WTC11 (cell line): ENCODE measurements at regions of chr12 and their contacts with region 1.

Region 1: DNA sequence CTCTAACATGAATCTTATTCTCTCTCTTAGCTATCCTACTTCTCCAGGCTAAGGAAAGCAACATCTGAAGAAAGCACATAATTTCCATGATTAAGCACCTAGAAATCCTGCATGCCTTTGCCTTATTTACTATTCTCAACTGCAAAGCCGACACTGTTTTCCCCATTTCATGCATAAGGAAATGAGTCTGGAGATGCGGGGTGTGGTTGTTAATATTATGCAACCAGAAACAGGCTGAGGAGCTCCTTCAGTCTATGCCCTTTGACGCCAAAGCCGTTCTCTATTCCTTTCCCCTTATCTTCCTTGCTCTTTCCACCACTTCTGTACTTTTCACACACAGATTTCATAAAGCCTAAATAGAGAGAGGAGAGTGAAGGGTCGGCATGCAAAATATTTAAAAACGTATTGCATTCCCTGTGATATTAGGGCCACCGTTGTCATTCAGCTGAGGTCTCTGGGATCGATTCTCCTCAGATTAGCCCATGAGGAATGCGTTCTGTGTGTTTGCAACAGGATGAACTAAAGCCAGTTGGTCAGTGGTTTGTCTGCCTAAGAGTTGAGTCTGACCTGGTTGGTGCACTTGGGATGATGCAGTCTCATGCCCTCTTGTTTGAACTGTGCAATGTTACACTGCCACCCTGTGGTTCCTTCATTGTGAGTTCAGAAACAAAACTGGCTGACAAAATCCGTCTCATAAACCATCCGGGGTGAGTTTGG is 53.1 kb upstream of the PLEKHG7 start:
- DNase-seq: peak; percentile 50
- ATAC-seq: peak; percentile 98
- H3K4me3 Mint-ChIP-seq: no peak overlapping the region
- H3K27ac Mint-ChIP-seq: peak overlapping the region; percentile 36; the same call in 1 of the 2 replicates
- H3K4me1 Mint-ChIP-seq: peaks cover 31% of the 10 kb centered on the region
- H3K27me3 Mint-ChIP-seq: no peaks in the 10 kb centered on the region
- CTCF ChIP-seq: peak; percentile 36; the same call in 1 of the 2 replicates

Region 2: GRCh38 chr12:92608151-92609091 is 41.2 kb before region 1 on chr12:
- CTCF ChIA-PET with region 1: interaction called, 10 read pairs
- POLR2A ChIA-PET with region 1: no interaction called
- DNase-seq: no peak
- ATAC-seq: peak; percentile 71
- H3K4me3 Mint-ChIP-seq: no peak overlapping the region
- H3K27ac Mint-ChIP-seq: no peak overlapping the region
- H3K4me1 Mint-ChIP-seq: peaks cover 26% of the 10 kb centered on the region
- H3K27me3 Mint-ChIP-seq: no peaks in the 10 kb centered on the region
- CTCF ChIP-seq: no peak